ENCODE measurements at regions of chr18 and their contacts with region 1.

Region 1: GRCh38 chr18:74957601-74958224 is 251.2 kb downstream of the PTGR3 start:
- DNase-seq: no peak
- ATAC-seq: no peak
- H3K4me3 ChIP-seq: no peak overlapping the region
- H3K27ac ChIP-seq: no peak overlapping the region
- H3K4me1 ChIP-seq: peaks cover 0 to 8% (median 0%) of the 10 kb centered on the region in 9 donors
- H3K27me3 ChIP-seq: no peaks in the 10 kb centered on the region
- CTCF ChIP-seq: no peak

Region 2: DNA sequence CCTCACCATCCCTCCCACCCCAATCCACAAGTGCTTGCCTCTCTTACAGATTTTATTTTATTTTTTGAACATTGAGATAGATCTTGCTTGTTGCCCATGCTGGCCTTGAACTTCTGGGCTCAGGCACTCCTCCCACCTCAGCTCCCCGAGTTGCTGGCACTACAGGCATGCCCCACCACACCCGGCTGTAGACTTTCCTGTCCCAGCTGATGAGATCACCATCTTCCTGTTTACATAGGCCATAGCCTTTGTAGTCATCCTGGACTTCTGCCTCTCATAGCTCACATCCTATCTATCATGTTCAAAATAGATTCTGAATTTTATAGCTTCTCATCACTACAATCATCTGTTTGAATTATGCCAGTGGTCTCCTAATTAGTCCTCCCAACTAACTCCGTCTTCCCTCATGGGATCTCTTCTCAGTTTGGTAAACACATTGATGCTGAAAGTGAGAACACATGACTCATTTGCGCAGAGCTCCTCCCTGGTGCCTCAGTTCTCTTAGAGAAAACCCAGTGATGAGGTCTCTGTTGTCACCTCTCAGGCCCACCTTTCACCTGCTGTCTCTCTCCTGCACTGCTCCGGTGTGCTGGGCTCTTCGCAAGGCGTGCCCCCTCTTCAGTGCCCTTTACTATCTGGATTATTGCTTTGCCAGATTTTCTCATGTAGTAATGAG is 117.1 kb before region 1 on chr18:
- intact Hi-C with region 1: no loop called
- DNase-seq: no peak
- ATAC-seq: peak in 4 of 8 donors; percentile 28 to 71 (median 52)
- H3K4me3 ChIP-seq: no peak overlapping the region
- H3K27ac ChIP-seq: peak overlapping the region in 2 of 10 donors; percentile 6 to 12
- H3K4me1 ChIP-seq: peaks cover 0 to 33% (median 10%) of the 10 kb centered on the region in 9 donors
- H3K27me3 ChIP-seq: no peaks in the 10 kb centered on the region
- CTCF ChIP-seq: no peak

Region 3: GRCh38 chr18:75005626-75006025 is 47.9 kb after region 1 on chr18:
- intact Hi-C with region 1: loop called in 1 of 10 experiments (anchors 5 kb)
- DNase-seq: no peak
- ATAC-seq: no peak
- H3K4me3 ChIP-seq: no peak overlapping the region
- H3K27ac ChIP-seq: no peak overlapping the region
- H3K4me1 ChIP-seq: peaks cover 0 to 35% (median 10%) of the 10 kb centered on the region in 9 donors
- H3K27me3 ChIP-seq: no peaks in the 10 kb centered on the region
- CTCF ChIP-seq: no peak

Region 4: GRCh38 chr18:75066936-75067335 is 109.2 kb after region 1 on chr18:
- intact Hi-C with region 1: no loop called
- DNase-seq: no peak
- ATAC-seq: no peak
- H3K4me3 ChIP-seq: no peak overlapping the region
- H3K27ac ChIP-seq: no peak overlapping the region
- H3K4me1 ChIP-seq: peaks cover 0 to 31% (median 9%) of the 10 kb centered on the region in 9 donors
- H3K27me3 ChIP-seq: no peaks in the 10 kb centered on the region
- CTCF ChIP-seq: no peak

Measured in heart right ventricle (tissue), 16 donors.